ENCODE measurements at regions of chr17 and their contacts with region 1.

Region 1: DNA sequence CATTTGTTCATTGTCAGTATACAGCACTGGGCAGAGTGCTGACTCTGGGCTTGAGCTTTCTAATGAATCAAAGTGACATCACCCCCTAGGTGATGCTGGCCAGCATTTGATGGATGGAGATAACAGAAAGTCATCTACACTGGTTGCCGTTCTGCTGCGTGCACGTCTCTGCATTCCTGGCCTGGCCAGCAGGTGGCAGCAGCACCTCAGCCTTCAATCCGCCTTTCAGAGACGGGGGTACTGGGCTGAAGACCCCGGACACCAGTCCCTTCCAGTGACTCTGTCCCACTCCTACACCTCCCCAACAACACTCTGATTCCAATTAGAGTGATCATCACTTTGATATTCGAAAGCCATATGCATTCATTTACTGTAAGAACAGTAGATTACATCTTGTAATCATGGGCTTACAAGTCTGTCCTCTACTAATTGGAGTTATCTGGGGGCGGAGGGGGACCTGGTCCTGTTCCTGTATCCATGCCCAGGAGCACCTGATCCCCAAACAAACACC is 6.0 kb downstream of the CPSF4L start:
- DNase-seq: peak; percentile 33 to 88 (median 73)

Region 2: DNA sequence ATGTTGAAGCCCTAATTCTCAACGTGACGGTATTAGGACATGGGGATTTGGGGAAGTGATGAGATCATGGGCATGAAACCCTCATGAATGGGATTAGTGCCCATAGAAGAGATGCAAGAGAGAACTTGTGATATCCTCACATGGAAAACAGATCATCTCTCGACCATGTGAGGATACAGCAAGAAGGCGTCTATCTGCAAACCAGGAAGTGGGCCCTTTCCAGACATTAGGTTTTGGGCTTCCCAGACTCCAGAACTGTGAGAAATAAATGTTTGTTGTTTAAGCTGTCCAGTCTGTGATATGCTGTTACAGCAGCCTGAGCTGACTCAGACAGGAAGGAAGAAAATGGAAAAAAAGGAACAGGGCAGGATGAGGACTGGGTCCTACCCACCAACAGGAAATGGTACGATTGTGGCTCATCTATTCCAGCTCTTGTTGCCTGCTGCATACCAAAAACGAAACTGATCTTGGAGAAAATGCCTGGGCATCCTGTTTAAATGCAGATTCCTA is 112.8 kb before region 1 on chr17:
- intact Hi-C with region 1: no loop called
- DNase-seq: no peak

Region 3: GRCh38 chr17:73210002-73210678 is 45.6 kb before region 1 on chr17:
- intact Hi-C with region 1: no loop called
- DNase-seq: no peak

Region 4: GRCh38 chr17:73371285-73371684 is 115.6 kb after region 1 on chr17:
- intact Hi-C with region 1: loop called (anchors 1 kb)
- DNase-seq: no peak